Activated naive CD8-positive, alpha-beta T cell treated with anti-CD3 and anti-CD28 coated beads, Interleukin-2, amount 10 ng/mL, durations not matched to agents 7 days and 5 days (primary cell): ENCODE measurements at regions of chr12 and their contacts with region 1.

Region 1: DNA sequence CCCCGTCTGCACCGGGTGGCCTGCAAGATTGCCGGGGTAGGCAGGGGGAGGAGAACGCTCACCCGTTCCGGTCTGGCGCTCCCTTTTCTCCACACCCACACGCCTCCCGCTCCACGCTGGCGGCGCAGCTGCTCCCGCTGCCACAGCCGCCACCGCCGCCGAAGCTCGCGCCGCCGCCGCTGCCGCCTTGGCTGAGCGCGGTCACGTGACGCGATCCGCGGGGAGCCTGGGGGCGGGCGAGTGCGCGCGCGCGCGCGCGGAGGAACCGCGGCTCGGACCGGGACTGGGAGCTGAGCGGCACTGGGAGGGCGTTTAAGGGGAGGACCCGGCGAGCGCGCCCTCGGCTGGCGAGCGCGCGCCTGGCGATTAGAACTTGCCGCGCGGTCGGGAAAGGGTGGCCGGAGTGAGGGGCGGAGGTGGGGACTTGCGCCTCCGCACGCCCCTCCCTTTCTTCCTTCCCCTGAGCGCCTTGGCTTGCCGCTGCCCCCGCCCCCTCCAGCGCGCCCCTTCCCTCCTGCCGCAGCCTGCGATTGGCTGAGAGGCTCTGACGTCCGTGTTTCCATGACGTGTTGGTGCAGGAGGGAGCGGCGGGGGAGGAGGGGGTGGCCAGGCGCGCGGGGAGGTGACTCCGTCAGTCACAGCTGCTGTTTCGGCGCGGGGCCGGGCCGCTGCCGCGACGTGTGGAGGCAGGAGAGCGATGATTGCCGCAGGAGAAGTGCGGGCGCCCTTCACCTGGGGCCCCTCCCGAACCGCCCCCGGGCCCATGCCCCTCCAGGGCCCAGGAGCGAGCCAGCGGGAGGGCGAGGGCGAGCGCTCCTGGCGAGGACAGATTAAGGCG is 738 bp upstream of the ATP2B1 start:
- DNase-seq: peak; percentile 97
- ATAC-seq: peak; percentile 80
- H3K4me3 Mint-ChIP-seq: peak overlapping the region; percentile 83
- H3K27ac Mint-ChIP-seq: peak overlapping the region; percentile 83
- H3K4me1 Mint-ChIP-seq: peaks cover 21% of the 10 kb centered on the region
- H3K27me3 Mint-ChIP-seq: peaks cover 13% of the 10 kb centered on the region

Region 2: GRCh38 chr12:89733579-89734201 is 24.3 kb after region 1 on chr12:
- POLR2A ChIA-PET with region 1: interaction called, 12 read pairs
- DNase-seq: no peak
- ATAC-seq: peak; percentile 52
- H3K4me3 Mint-ChIP-seq: peak overlapping the region; percentile 11
- H3K27ac Mint-ChIP-seq: peak overlapping the region; percentile 37
- H3K4me1 Mint-ChIP-seq: peaks cover 8% of the 10 kb centered on the region
- H3K27me3 Mint-ChIP-seq: no peaks in the 10 kb centered on the region

Region 3: DNA sequence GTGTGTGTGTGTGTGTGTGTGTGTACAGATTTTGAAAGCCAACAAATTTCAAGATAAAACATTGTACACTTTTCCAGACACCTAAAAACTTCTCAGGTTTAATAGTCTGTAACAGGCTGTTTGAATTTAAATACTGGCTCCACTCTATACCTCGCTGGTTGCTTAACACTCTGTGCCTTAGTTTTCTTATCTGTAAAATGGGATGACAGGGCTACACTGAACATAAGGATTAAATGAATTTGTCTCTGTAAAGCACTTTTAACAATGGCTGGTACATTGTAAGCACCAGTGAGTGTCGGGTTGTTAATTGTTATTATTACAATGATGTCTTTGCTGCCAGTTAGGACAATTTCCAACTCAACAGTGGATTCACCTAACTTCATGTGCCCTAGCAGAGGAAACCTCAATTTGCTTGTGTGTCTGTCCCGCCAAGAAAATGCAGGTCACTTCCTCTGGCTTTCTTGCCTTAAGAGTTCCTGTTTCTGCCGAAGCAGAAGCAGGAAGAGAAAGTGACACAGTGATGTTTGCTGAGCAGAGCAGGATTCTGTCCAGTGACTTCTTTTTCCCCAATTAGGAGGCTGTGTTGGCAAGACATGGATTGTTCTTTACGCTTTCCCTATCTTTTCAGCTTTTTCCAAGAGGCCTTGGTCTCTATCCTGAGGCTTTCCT is 153.3 kb after region 1 on chr12:
- POLR2A ChIA-PET with region 1: interaction called, 28 read pairs
- DNase-seq: no peak
- ATAC-seq: peak; percentile 73
- H3K4me3 Mint-ChIP-seq: peak overlapping the region; percentile 79
- H3K27ac Mint-ChIP-seq: peak overlapping the region; percentile 86
- H3K4me1 Mint-ChIP-seq: peaks cover 31% of the 10 kb centered on the region
- H3K27me3 Mint-ChIP-seq: no peaks in the 10 kb centered on the region

Region 4: DNA sequence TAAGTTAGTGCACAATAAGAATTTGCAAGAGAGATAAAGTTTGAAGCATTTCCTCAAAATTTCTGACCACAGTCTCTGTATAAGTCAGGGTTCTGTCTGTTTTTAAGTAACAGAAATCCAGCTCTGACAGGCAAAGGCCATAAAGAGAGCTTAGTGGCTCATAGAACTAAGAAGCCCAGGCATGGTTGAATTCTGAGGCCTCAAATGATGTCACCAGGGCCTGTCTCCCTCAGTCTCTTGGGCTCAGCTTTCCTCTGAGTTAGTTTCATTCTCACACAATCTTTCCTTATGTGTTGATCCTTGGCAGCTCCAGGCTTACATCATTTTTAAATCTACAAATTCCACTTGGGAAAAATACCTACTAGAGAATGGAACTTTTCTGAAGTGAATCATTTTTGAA is 172.7 kb after region 1 on chr12:
- POLR2A ChIA-PET with region 1: interaction called, 23 read pairs
- DNase-seq: no peak
- ATAC-seq: no peak
- H3K4me3 Mint-ChIP-seq: peak overlapping the region; percentile 30
- H3K27ac Mint-ChIP-seq: peak overlapping the region; percentile 91
- H3K4me1 Mint-ChIP-seq: peaks cover 29% of the 10 kb centered on the region
- H3K27me3 Mint-ChIP-seq: no peaks in the 10 kb centered on the region